ENCODE measurements at regions of chr6 and their contacts with region 1.

Region 1: GRCh38 chr6:29743568-29743967 is 20.3 kb downstream of the HLA-F start:
- DNase-seq: no peak
- ATAC-seq: no peak
- H3K4me3 ChIP-seq: no peak overlapping the region
- H3K27ac ChIP-seq: no peak overlapping the region
- H3K4me1 ChIP-seq: peaks cover 0 to 13% (median 7%) of the 10 kb centered on the region in 12 donors
- H3K27me3 ChIP-seq: no peaks in the 10 kb centered on the region
- CTCF ChIP-seq: no peak
- POLR2A ChIP-seq: no peak

Region 2: DNA sequence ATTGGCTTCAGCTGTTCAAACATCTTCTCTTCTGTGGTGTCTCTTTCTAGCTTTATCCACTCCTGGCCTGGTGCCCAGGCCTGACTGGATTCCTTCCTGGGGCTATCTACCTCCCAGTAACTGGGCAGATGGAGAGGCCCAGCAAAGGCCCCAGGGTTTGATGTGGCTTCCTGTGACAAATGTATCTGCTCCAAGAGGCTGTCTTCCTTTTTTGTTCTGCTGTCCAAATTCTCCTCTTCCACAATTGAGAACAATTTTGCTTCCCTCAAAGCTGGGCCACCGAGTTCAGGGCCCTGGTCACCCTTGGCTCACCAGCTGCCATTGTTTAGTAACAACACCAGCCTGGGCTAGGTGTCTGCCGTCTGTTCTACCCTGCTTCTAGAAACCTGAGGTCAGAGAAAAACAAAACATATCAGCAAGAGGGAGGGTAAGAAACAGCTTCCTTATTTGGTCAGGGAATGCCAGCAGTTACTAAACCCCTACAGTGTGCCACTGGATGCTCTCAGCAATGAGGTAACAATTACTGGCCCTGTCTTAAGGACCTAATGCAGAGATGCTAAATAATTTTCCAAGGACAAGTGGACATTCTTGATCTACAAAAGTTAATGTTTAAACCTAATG is 66.5 kb before region 1 on chr6:
- intact Hi-C with region 1: no loop called
- DNase-seq: peak in 1 of 5 donors; percentile 38
- ATAC-seq: peak in 3 of 4 donors; percentile 7 to 73 (median 26)
- H3K4me3 ChIP-seq: no peak overlapping the region
- H3K27ac ChIP-seq: peak overlapping the region in 1 of 12 donors; percentile 13
- H3K4me1 ChIP-seq: peaks cover 0 to 7% (median 0%) of the 10 kb centered on the region in 12 donors
- H3K27me3 ChIP-seq: peaks cover 0 to 8% (median 0%) of the 10 kb centered on the region in 9 donors
- CTCF ChIP-seq: no peak
- POLR2A ChIP-seq: no peak

Region 3: GRCh38 chr6:29694637-29695036 is 48.9 kb before region 1 on chr6:
- intact Hi-C with region 1: no loop called
- DNase-seq: no peak
- ATAC-seq: no peak
- H3K4me3 ChIP-seq: no peak overlapping the region
- H3K27ac ChIP-seq: no peak overlapping the region
- H3K4me1 ChIP-seq: no peaks in the 10 kb centered on the region
- H3K27me3 ChIP-seq: no peaks in the 10 kb centered on the region
- CTCF ChIP-seq: no peak
- POLR2A ChIP-seq: no peak

Region 4: DNA sequence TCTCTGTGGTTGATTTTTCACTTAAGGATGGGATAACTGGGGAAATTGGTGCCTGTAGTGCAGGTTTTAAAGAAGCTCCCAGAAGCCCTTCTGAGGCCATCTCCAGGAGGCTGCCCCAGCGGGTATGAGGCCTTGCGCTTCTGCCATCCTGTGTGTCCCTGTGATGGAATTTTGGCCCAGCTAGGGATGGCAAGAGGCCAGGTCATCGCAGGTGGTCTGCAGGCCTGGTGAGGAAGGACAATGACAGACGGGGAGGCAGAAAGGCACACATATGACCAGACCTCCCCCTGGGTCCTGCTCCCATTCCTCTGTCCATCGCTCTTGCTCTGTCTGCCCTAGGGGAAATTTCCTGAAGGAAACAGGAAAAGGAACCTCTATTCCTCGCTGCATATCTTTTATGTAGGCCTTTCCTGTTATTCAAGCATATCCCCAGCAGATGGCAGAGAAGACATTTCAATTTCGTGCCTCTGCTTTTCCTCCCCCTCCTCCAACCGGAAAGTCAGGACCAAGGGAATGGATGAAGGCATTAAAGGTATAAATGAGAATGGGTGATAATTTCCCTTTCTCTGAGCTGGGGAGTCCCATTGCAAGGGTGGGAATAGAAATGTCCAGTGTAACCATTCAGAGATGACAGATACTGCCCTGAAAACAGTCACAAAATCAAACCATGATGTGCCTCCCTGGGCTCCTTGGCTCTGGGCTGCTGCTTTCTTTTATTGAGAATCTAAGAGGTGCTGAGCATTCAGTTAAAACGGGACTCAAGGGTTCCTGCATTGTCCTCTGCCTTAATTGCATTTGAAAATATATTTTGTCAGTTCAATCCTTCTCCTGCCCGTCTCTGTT is 38.0 kb before region 1 on chr6:
- intact Hi-C with region 1: loop called in 1 of 10 experiments (anchors 5 kb)
- DNase-seq: peak in 1 of 5 donors; percentile 34
- ATAC-seq: peak in 3 of 4 donors; percentile 64 to 70 (median 67)
- H3K4me3 ChIP-seq: no peak overlapping the region
- H3K27ac ChIP-seq: no peak overlapping the region
- H3K4me1 ChIP-seq: peaks cover 0 to 20% (median 0%) of the 10 kb centered on the region in 12 donors
- H3K27me3 ChIP-seq: peaks cover 0 to 25% (median 2%) of the 10 kb centered on the region in 9 donors
- CTCF ChIP-seq: peak in 11 of 12 donors; percentile 38 to 74 (median 65)
- POLR2A ChIP-seq: no peak

Region 5: DNA sequence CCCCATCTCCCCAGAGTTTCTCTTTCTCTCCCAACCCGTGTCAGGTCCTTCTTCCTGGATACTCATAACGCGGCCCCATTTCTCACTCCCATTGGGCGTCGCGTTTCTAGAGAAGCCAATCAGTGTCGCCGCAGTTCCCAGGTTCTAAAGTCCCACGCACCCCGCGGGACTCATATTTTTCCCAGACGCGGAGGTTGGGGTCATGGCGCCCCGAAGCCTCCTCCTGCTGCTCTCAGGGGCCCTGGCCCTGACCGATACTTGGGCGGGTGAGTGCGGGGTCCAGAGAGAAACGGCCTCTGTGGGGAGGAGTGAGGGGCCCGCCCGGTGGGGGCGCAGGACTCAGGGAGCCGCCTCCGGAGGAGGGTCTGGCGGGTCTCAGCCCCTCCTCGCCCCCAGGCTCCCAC is 20.3 kb before region 1 on chr6 and contains the start of gene HLA-F:
- intact Hi-C with region 1: loop called in 1 of 10 experiments (anchors 1 kb)
- DNase-seq: peak; percentile 86 to 92 (median 89)
- ATAC-seq: peak; percentile 95 to 99 (median 98)
- H3K4me3 ChIP-seq: peak within 1 kb of the TSS; percentile 63 to 98 (median 88)
- H3K27ac ChIP-seq: peak within 1 kb of the TSS; percentile 80 to 97 (median 92)
- H3K4me1 ChIP-seq: peaks cover 0 to 35% (median 16%) of the 10 kb centered on the region in 12 donors
- H3K27me3 ChIP-seq: no peaks in the 10 kb centered on the region
- CTCF ChIP-seq: peak in 1 of 12 donors; percentile 8
- POLR2A ChIP-seq: peak; percentile 69 to 82
- total RNA-seq, gene HLA-F: 23.1 to 228 (median 34.7) TPM